Activated naive CD4-positive, alpha-beta T cell treated with anti-CD3 and anti-CD28 coated beads for 36 hours (primary cell): ENCODE measurements at regions of chr18 and their contacts with region 1.

Region 1: GRCh38 chr18:54828281-54828881 is at the start of gene RAB27B:
- DNase-seq: peak; percentile 85
- H3K4me3 Mint-ChIP-seq: peak within 1 kb of the TSS; percentile 75
- H3K27ac Mint-ChIP-seq: peak within 1 kb of the TSS; percentile 4
- H3K4me1 Mint-ChIP-seq: peaks cover 18% of the 10 kb centered on the region
- H3K27me3 Mint-ChIP-seq: no peaks in the 10 kb centered on the region
- total RNA-seq, gene RAB27B: 0.52 TPM in 1 of 2 experiments, not detected in the other

Region 2: DNA sequence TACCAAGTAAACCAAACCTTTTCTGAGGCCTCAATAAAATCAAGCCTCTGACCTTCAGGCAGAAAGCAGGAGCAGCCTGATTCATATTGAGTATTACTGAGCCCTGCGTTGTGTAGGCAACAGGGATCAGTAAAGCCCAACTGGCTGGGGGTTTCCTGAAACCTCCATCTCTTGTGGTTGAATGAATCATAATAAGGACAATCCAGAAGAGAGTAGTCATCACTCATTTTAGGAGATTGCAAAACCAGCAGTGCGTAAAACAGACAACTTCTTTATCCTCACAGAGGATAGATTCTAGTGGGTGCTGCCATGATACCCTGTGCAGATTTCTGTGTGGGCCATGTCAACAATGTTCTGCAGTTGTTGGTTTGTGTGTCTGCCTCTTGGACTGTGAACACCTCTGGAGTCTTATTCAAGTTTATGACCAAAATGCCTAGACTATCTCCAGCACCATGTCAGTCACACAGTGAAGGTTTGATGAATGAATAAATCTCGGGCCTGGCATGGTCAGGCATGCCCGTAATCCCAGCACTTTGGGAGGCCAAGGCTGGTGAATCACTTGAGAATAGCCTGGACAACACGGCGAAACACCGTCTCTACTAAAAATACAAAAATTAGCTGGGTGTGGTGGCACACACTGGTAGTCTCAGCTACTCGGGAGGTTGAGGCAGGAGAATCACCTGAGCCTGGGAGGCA is 52.0 kb before region 1 on chr18:
- CTCF ChIA-PET with region 1: no interaction called
- intact Hi-C with region 1: loop called (anchors 1 kb)
- DNase-seq: peak; percentile 56
- H3K4me3 Mint-ChIP-seq: no peak overlapping the region
- H3K27ac Mint-ChIP-seq: no peak overlapping the region
- H3K4me1 Mint-ChIP-seq: peaks cover 3% of the 10 kb centered on the region
- H3K27me3 Mint-ChIP-seq: peaks cover 2% of the 10 kb centered on the region

Region 3: DNA sequence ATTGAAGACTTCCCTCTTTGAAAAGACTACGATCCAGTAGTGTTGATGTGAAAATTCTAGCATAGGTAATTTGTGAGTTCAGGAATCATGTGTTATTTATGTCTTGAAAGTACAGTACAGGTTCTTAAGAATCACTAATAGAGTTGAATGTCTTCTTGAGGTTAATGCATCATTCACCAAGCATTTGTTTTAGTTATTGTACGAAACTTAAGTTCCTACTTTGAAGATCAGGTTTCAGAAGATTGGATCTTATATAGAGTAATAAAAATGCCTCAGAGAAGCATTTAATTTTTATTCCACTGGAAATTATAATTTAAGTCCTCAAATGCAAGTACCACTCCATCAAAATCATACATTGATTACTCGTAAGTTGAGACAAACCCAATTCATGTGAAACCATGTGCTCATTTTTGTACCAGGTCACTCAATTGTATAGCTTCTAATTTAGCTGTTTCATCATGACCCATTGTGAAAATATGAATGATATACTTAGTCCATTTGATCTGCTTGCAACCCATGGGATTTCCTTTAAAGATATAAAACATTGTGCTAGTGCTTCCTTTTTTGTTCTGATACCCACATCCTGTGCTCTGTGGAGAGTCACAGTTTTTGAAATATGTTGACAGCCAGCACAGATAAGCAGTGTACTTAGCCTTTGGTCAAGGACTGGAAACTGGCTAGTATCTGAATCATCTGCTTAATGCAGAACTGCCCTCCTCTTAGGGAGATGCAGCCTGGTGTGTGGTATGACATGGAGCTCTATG is 22.6 kb before region 1 on chr18:
- CTCF ChIA-PET with region 1: no interaction called
- intact Hi-C with region 1: loop called (anchors 2 kb)
- DNase-seq: no peak
- H3K4me3 Mint-ChIP-seq: no peak overlapping the region
- H3K27ac Mint-ChIP-seq: no peak overlapping the region
- H3K4me1 Mint-ChIP-seq: peaks cover 8% of the 10 kb centered on the region
- H3K27me3 Mint-ChIP-seq: no peaks in the 10 kb centered on the region

Region 4: DNA sequence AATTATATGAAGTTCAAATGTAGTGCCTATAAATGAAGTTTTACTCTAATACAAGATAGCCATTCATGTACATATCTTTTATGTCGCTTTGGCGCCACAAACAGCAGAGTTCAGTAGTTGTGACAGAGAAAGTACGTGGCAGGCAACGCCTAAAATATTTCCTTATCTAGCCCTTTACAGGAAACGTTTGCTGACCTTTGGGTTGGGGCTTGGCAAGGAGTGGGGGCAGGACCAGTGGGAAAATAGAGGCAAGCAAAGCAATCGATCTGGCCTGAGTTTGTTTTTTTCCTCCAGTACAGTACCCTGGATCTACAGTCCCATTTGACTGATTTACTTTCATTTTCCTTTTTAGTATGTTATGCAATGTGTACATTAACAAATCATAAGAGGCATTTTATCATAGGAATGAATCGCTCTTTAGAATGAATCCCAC is 117.8 kb after region 1 on chr18:
- CTCF ChIA-PET with region 1: no interaction called
- intact Hi-C with region 1: loop called (anchors 1 kb)
- DNase-seq: peak; percentile 28
- H3K4me3 Mint-ChIP-seq: peak overlapping the region; percentile 82
- H3K27ac Mint-ChIP-seq: peak overlapping the region; percentile 73
- H3K4me1 Mint-ChIP-seq: peaks cover 14% of the 10 kb centered on the region
- H3K27me3 Mint-ChIP-seq: no peaks in the 10 kb centered on the region